MCF 10A (cell line): ENCODE measurements at regions of chr3 and their contacts with region 1.

Region 1: GRCh38 chr3:133661454-133662277 is at the start of gene TOPBP1:
- DNase-seq: peak; percentile 74
- H3K4me3 Mint-ChIP-seq: peak within 1 kb of the TSS; percentile 94
- H3K27ac Mint-ChIP-seq: peak within 1 kb of the TSS; percentile 91
- H3K4me1 Mint-ChIP-seq: peaks cover 22% of the 10 kb centered on the region
- H3K27me3 Mint-ChIP-seq: no peaks in the 10 kb centered on the region
- CTCF ChIP-seq: no peak
- total RNA-seq, gene TOPBP1: 27.4 and 27.7 TPM in 2 replicates

Region 2: DNA sequence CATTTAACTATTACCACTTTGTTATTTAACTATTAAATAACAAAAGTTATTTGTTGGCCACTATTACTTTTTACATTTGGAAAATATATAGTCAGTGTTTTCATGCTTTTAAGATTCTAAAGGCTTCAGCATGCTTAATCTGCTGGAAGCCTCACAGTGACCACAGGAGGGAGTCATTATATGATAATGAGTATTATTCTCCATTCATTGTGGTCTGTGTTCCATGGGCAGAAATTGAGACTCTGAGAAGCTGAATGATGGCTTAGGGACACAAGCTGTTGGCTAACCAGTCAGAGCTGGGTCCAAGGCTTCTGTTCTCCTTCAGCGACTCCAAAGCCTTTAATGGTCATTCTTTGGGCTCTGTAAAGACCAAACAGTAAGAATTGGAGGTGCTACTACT is 197.1 kb before region 1 on chr3:
- CTCF ChIA-PET with region 1: no interaction called
- POLR2A ChIA-PET with region 1: no interaction called
- intact Hi-C with region 1: loop called (anchors 10 kb)
- DNase-seq: peak; percentile 48
- H3K4me3 Mint-ChIP-seq: no peak overlapping the region
- H3K27ac Mint-ChIP-seq: no peak overlapping the region
- H3K4me1 Mint-ChIP-seq: peaks cover 8% of the 10 kb centered on the region
- H3K27me3 Mint-ChIP-seq: no peaks in the 10 kb centered on the region
- CTCF ChIP-seq: peak; percentile 35

Region 3: GRCh38 chr3:133487920-133488540 is 173.6 kb before region 1 on chr3:
- CTCF ChIA-PET with region 1: no interaction called
- POLR2A ChIA-PET with region 1: no interaction called
- intact Hi-C with region 1: loop called (anchors 5 kb)
- DNase-seq: peak; percentile 58
- H3K4me3 Mint-ChIP-seq: no peak overlapping the region
- H3K27ac Mint-ChIP-seq: no peak overlapping the region
- H3K4me1 Mint-ChIP-seq: peaks cover 19% of the 10 kb centered on the region
- H3K27me3 Mint-ChIP-seq: no peaks in the 10 kb centered on the region
- CTCF ChIP-seq: peak; percentile 66

Region 4: GRCh38 chr3:133676336-133677118 is 14.9 kb after region 1 on chr3:
- CTCF ChIA-PET with region 1: interaction called, 12 read pairs
- POLR2A ChIA-PET with region 1: no interaction called
- intact Hi-C with region 1: no loop called
- DNase-seq: no peak
- H3K4me3 Mint-ChIP-seq: no peak overlapping the region
- H3K27ac Mint-ChIP-seq: no peak overlapping the region
- H3K4me1 Mint-ChIP-seq: no peaks in the 10 kb centered on the region
- H3K27me3 Mint-ChIP-seq: peaks cover 33% of the 10 kb centered on the region
- CTCF ChIP-seq: no peak

Region 5: DNA sequence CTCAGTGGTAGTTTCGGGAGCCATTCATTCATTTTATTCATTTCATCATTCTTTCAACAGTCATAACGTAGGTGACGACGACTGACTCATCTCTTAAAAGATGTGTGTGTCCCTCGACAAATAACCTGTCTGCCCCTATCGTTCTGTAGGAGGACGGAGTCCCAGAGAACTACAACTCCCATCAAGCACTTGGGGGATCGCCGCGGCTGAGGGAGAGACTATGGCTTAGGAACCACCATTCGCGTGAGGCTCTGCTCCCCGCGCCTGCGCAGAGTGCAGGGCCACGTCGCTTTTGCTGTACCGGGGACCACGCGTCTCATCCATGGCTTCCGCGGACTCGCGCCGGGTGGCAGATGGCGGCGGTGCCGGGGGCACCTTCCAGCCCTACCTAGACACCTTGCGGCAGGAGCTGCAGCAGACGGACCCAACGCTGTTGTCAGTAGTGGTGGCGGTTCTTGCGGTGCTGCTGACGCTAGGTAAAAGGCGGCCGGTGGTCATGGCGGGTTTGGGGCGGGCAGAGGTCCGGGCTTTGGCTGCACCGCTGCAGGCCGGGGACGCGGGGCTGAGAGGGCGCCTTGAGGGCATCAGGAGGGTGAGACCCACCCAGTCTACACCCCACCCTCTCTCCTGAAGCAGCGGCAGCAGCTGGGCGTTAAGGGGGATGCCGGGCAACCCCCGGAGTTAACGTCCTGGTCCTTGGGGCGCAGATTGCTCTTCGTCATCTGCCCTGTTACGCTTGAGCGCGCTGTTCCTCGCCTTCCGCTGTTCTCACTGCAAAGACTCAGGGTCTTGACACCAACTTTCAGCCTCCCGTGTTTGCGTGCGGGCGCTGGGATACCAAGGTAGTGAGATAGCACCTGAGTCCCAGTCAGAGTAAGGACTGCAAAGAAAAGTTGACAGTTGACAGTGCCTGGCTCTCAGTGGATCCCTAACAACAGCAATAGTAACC is 144.1 kb after region 1 on chr3 and contains the start of gene SRPRB:
- CTCF ChIA-PET with region 1: interaction called, 4 read pairs
- POLR2A ChIA-PET with region 1: interaction called, 3 read pairs
- intact Hi-C with region 1: loop called (anchors 1 kb)
- DNase-seq: peak; percentile 96
- H3K4me3 Mint-ChIP-seq: peak within 1 kb of the TSS; percentile 85
- H3K27ac Mint-ChIP-seq: peak within 1 kb of the TSS; percentile 30
- H3K4me1 Mint-ChIP-seq: peaks cover 8% of the 10 kb centered on the region
- H3K27me3 Mint-ChIP-seq: no peaks in the 10 kb centered on the region
- CTCF ChIP-seq: no peak
- total RNA-seq, gene SRPRB: 180 and 212 TPM in 2 replicates